ENCODE measurements at regions of chr1 and their contacts with region 1.

Region 1: DNA sequence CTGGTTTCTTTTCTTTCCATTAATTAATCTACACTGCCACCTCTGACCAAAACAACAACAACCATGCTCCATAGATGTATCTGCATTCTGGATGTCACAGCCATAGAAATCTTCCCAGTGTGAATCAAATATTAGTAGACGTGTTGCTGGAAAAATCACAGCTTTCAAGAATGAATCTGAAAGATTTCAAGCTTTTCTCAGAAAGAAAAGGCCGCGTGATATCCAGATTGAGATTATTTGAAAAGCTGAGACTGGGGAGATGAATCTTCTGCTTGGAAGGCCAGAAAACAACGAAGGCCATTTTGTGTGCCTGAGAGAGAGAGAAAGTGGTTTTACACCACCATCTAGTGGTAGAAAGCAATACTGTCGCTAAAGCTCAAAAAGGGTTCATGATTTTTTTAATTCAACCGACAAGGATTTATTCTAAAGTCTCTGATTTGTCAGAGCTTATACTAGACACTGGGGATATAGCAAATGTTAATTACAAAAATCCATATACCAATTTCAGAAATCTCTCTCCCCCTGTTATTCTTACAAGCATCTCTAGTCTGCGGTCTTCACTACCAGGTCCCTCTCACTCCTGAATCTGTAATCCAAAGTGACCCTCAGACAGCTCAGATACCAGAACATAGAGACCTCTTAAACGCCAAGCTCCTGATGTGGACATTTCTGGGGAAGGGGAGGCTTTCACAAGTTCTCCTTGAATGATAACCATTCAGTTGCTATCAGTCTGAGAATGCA is 87.5 kb upstream of the SGIP1 start:
- DNase-seq: no peak
- ATAC-seq: peak; percentile 69
- H3K4me3 Mint-ChIP-seq: peak overlapping the region; percentile 69
- H3K27ac Mint-ChIP-seq: peak overlapping the region; percentile 93
- H3K4me1 Mint-ChIP-seq: peaks cover 33% of the 10 kb centered on the region
- H3K27me3 Mint-ChIP-seq: no peaks in the 10 kb centered on the region
- CTCF ChIP-seq: no peak

Region 2: DNA sequence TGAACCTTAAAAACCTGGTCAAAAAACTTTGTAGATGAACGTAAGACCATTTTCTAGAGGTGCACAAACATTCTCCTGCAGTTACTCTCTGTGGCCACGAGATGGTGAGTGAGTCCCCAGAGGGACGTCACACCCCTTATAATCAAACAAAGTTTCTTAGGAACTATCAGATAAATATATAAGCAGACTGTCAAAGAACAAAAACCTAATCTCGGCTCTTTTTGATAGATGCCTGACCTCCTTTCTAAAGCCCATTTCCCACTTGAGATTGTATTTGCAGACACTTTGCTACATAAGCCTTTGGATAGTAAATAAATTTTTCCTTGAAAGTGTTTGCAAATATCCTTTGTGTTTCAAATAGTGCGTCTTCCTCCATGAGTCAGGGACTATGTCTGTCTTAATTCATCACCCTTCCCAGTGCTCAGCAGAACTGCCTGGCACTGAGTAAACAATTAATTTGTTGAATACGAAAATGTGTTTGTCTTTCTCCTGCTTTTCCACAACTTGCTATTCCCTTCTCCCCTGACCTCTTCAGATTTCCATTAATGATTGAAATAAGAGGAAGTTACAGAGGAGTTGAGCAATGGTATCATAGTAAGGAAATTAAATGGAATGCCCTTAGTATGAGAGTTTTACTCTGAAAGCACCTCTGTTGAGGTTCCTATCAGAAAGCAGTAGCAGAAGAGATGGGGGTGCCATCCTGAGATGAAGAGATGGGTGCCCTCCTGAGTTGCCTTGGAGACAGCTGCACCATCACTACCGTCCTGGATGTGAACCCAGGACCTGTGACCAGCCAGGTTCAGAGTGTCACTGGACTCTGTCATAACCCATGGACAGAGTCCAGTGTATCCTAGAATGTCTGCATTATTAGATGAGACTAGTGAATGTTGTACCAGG is 1759.4 kb before region 1 on chr1:
- CTCF ChIA-PET with region 1: no interaction called
- POLR2A ChIA-PET with region 1: no interaction called
- intact Hi-C with region 1: loop called (anchors 5 kb)
- DNase-seq: no peak
- ATAC-seq: peak; percentile 64
- H3K4me3 Mint-ChIP-seq: no peak overlapping the region
- H3K27ac Mint-ChIP-seq: no peak overlapping the region
- H3K4me1 Mint-ChIP-seq: no peaks in the 10 kb centered on the region
- H3K27me3 Mint-ChIP-seq: no peaks in the 10 kb centered on the region
- CTCF ChIP-seq: peak; percentile 67

Region 3: GRCh38 chr1:65694126-65694525 is 752.3 kb before region 1 on chr1:
- CTCF ChIA-PET with region 1: no interaction called
- POLR2A ChIA-PET with region 1: no interaction called
- intact Hi-C with region 1: loop called (anchors 2 kb)
- DNase-seq: no peak
- ATAC-seq: no peak
- H3K4me3 Mint-ChIP-seq: no peak overlapping the region
- H3K27ac Mint-ChIP-seq: no peak overlapping the region
- H3K4me1 Mint-ChIP-seq: no peaks in the 10 kb centered on the region
- H3K27me3 Mint-ChIP-seq: peaks cover 2% of the 10 kb centered on the region
- CTCF ChIP-seq: no peak

Region 4: GRCh38 chr1:66282343-66282852 is 164.0 kb before region 1 on chr1:
- CTCF ChIA-PET with region 1: interaction called, 34 read pairs
- POLR2A ChIA-PET with region 1: interaction called, 29 read pairs
- intact Hi-C with region 1: loop called (anchors 1 kb)
- DNase-seq: no peak
- ATAC-seq: peak; percentile 82
- H3K4me3 Mint-ChIP-seq: peak overlapping the region; percentile 75
- H3K27ac Mint-ChIP-seq: peak overlapping the region; percentile 98
- H3K4me1 Mint-ChIP-seq: peaks cover 91% of the 10 kb centered on the region
- H3K27me3 Mint-ChIP-seq: no peaks in the 10 kb centered on the region
- CTCF ChIP-seq: no peak

Region 5: DNA sequence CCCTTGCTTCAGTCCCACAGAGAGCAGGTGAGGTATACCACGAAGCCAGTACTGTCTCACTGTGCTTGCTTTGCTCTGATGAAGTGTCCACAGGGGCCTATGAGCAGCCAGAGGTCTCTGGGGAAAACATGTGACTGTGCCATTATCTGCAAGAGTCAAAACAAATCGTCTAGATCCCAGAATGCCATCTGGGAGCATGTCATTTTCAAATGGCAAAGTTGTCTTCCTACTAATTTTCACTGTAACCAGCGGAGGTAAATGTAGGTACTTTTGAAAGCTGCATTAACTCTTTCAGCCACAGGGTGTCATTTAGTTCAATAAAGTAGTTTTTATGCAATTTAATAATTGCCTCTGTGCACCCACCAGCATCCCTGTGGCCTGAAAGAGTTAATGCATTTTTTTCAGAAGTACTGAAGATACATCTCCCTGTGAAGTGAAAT is 86.1 kb before region 1 on chr1:
- CTCF ChIA-PET with region 1: interaction called, 55 read pairs
- POLR2A ChIA-PET with region 1: interaction called, 18 read pairs
- intact Hi-C with region 1: loop called (anchors 1 kb)
- DNase-seq: no peak
- ATAC-seq: peak; percentile 64
- H3K4me3 Mint-ChIP-seq: no peak overlapping the region
- H3K27ac Mint-ChIP-seq: peak overlapping the region; percentile 77
- H3K4me1 Mint-ChIP-seq: peaks cover 84% of the 10 kb centered on the region
- H3K27me3 Mint-ChIP-seq: no peaks in the 10 kb centered on the region
- CTCF ChIP-seq: no peak

Region 6: DNA sequence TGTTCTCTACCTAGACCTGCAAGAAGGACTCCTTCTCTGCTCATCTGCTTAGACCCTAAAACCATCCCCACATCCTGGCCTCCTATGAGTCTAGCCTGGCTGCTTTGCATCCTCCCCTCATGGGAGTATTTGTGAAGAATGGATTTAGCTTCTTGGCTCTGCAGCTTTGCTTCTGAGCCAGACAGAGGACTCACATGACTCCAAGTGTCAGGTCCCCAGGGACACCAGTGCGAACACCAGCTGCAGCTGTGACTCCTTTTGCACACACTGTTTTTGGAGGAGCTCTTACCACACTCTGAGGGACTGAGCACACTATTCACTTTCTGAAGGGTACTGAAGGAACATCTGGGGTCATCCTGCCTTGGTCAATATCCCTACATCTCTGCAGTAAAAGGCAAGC is 44.2 kb before region 1 on chr1:
- CTCF ChIA-PET with region 1: interaction called, 61 read pairs
- POLR2A ChIA-PET with region 1: interaction called, 27 read pairs
- intact Hi-C with region 1: loop called (anchors 1 kb)
- DNase-seq: peak; percentile 65
- ATAC-seq: peak; percentile 86
- H3K4me3 Mint-ChIP-seq: peak overlapping the region; percentile 72
- H3K27ac Mint-ChIP-seq: peak overlapping the region; percentile 90
- H3K4me1 Mint-ChIP-seq: peaks cover 67% of the 10 kb centered on the region
- H3K27me3 Mint-ChIP-seq: no peaks in the 10 kb centered on the region
- CTCF ChIP-seq: no peak